ENCODE measurements at regions of chr5 and their contacts with region 1.

Region 1: DNA sequence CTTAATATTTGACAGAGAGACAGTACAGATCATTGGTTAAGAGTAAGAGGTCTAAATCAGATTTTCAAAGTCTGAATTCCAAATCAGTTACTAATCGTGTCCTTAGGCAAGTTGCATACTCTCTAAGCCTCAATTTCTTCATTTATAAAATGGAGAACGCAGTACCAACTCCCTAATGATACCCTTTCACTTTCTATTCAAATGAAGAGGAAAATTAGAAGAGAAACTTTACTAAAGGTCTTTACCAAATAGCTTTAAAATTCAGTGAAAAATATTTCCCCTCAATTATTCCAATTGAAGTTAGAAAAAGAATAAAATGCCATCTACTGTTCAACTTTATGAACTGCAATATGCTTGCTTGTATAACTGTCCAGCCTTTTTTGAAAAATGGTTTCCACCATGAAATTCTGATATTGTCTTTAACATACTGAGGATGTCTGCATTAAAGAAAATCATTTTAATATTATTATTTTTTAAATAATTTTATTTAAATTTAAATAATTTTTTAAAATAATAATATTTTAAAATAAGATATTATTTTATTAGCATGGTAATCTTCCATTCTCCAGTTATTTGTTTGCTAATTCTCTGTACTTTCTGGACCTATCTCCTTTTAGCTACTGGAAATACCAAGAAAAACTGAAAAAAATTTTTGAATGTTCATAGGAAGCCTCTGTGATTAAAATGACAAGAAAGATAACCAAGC is 36.0 kb downstream of the POC5 start:
- DNase-seq: peak; percentile 46
- H3K4me3 Mint-ChIP-seq: peak overlapping the region; percentile 57
- H3K27ac Mint-ChIP-seq: peak overlapping the region; percentile 12
- H3K4me1 Mint-ChIP-seq: no peaks in the 10 kb centered on the region
- H3K27me3 Mint-ChIP-seq: no peaks in the 10 kb centered on the region
- CTCF ChIP-seq: peak; percentile 68

Region 2: GRCh38 chr5:74927336-74927735 is 753.9 kb before region 1 on chr5:
- CTCF ChIA-PET with region 1: no interaction called
- POLR2A ChIA-PET with region 1: no interaction called
- intact Hi-C with region 1: loop called (anchors 5 kb)
- DNase-seq: no peak
- H3K4me3 Mint-ChIP-seq: no peak overlapping the region
- H3K27ac Mint-ChIP-seq: no peak overlapping the region
- H3K4me1 Mint-ChIP-seq: no peaks in the 10 kb centered on the region
- H3K27me3 Mint-ChIP-seq: no peaks in the 10 kb centered on the region
- CTCF ChIP-seq: no peak

Region 3: GRCh38 chr5:75281716-75282465 is 399.4 kb before region 1 on chr5:
- CTCF ChIA-PET with region 1: no interaction called
- POLR2A ChIA-PET with region 1: no interaction called
- intact Hi-C with region 1: loop called (anchors 1 kb)
- DNase-seq: peak; percentile 10
- H3K4me3 Mint-ChIP-seq: no peak overlapping the region
- H3K27ac Mint-ChIP-seq: no peak overlapping the region
- H3K4me1 Mint-ChIP-seq: peaks cover 23% of the 10 kb centered on the region
- H3K27me3 Mint-ChIP-seq: no peaks in the 10 kb centered on the region
- CTCF ChIP-seq: no peak

Region 4: GRCh38 chr5:75426215-75426614 is 255.1 kb before region 1 on chr5:
- CTCF ChIA-PET with region 1: no interaction called
- POLR2A ChIA-PET with region 1: no interaction called
- intact Hi-C with region 1: loop called (anchors 10 kb)
- DNase-seq: no peak
- H3K4me3 Mint-ChIP-seq: no peak overlapping the region
- H3K27ac Mint-ChIP-seq: no peak overlapping the region
- H3K4me1 Mint-ChIP-seq: no peaks in the 10 kb centered on the region
- H3K27me3 Mint-ChIP-seq: no peaks in the 10 kb centered on the region
- CTCF ChIP-seq: no peak

Region 5: GRCh38 chr5:75511435-75512384 is 169.6 kb before region 1 on chr5 and contains the starts of genes CERT1 and POLK:
- CTCF ChIA-PET with region 1: interaction called, 4 read pairs
- POLR2A ChIA-PET with region 1: interaction called, 4 read pairs
- intact Hi-C with region 1: loop called (anchors 5 kb)
- DNase-seq: peak; percentile 98
- H3K4me3 Mint-ChIP-seq: peak within 1 kb of the TSS; percentile 79
- H3K27ac Mint-ChIP-seq: peak within 1 kb of the TSS; percentile 96
- H3K4me1 Mint-ChIP-seq: peaks cover 28% of the 10 kb centered on the region
- H3K27me3 Mint-ChIP-seq: no peaks in the 10 kb centered on the region
- CTCF ChIP-seq: no peak
- total RNA-seq, gene CERT1: 19.6 and 21.7 TPM in 2 replicates
- total RNA-seq, gene POLK: 30.2 and 34.9 TPM in 2 replicates

Region 6: DNA sequence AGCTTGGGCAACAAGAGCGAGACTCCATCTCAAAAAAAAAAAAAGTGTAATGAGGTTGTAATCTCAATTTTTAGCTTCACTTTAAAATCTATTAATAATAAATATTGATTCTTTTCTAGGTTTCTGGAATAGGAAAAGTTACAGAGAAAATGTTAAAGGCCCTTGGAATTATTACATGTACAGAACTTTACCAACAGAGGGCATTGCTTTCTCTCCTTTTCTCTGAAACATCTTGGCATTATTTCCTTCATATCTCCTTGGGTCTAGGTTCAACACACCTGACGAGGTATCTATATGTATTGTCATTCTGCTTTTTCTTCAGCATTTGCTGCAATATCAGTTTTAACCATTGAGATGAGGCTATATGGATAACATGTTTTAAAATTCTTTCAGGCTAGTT is 96.6 kb before region 1 on chr5:
- CTCF ChIA-PET with region 1: interaction called, 4 read pairs
- POLR2A ChIA-PET with region 1: no interaction called
- intact Hi-C with region 1: loop called (anchors 5 kb)
- DNase-seq: peak; percentile 9
- H3K4me3 Mint-ChIP-seq: no peak overlapping the region
- H3K27ac Mint-ChIP-seq: no peak overlapping the region
- H3K4me1 Mint-ChIP-seq: no peaks in the 10 kb centered on the region
- H3K27me3 Mint-ChIP-seq: no peaks in the 10 kb centered on the region
- CTCF ChIP-seq: peak; percentile 24

Region 7: DNA sequence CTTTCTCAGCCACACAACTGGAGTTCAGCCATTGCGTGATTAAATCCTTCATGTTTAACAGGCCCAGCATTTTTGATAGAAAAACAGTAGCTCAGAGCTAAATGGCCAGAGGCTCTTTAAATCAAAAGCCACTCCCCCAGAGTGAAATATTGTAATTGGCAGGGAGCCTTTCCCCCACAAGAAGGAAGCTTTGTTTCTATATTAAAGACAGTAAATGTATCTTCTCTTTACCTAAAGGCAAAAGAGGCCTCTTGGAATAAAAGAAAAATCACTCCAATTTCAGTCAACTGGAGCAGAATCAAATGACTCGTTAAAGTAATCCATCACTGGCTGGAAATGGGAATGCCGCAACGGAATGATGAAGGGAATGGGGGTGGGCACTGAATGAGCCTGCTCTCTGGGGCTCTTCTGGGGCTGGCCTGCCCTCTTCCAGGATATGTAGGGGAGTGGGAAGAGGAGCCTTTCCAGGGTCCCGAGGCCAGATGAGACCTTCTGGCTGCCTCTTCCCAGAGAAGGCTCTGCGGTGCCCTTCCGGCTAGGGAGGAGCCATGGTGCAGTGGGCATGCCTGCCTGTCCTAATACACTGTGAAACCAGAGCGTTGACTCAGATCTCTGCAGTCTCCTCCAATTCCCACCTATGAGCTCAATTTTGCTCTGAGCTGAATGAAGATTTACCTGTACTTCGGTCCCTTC is 24.8 kb before region 1 on chr5:
- CTCF ChIA-PET with region 1: interaction called, 4 read pairs
- POLR2A ChIA-PET with region 1: interaction called, 11 read pairs
- intact Hi-C with region 1: no loop called
- DNase-seq: no peak
- H3K4me3 Mint-ChIP-seq: peak overlapping the region; percentile 71
- H3K27ac Mint-ChIP-seq: peak overlapping the region; percentile 41
- H3K4me1 Mint-ChIP-seq: no peaks in the 10 kb centered on the region
- H3K27me3 Mint-ChIP-seq: no peaks in the 10 kb centered on the region
- CTCF ChIP-seq: no peak